ENCODE measurements at regions of chr14 and their contacts with region 1.

Region 1: GRCh38 chr14:55446218-55446654 is 5.8 kb upstream of the TBPL2 start:
- DNase-seq: peak; percentile 80
- H3K4me3 ChIP-seq: no peak overlapping the region
- H3K27ac ChIP-seq: no peak overlapping the region
- H3K4me1 ChIP-seq: peaks cover 39% of the 10 kb centered on the region
- H3K27me3 ChIP-seq: no peaks in the 10 kb centered on the region
- CTCF ChIP-seq: peak; percentile 58 to 65
- POLR2A ChIP-seq: no peak

Region 2: GRCh38 chr14:55386031-55386808 is 60.0 kb before region 1 on chr14:
- CTCF ChIA-PET with region 1: no interaction called
- POLR2A ChIA-PET with region 1: no interaction called
- dilution Hi-C with region 1: no loop called
- intact Hi-C with region 1: no loop called
- DNase-seq: no peak
- H3K4me3 ChIP-seq: no peak overlapping the region
- H3K27ac ChIP-seq: no peak overlapping the region
- H3K4me1 ChIP-seq: no peaks in the 10 kb centered on the region
- H3K27me3 ChIP-seq: no peaks in the 10 kb centered on the region
- CTCF ChIP-seq: no peak
- POLR2A ChIP-seq: no peak

Region 3: DNA sequence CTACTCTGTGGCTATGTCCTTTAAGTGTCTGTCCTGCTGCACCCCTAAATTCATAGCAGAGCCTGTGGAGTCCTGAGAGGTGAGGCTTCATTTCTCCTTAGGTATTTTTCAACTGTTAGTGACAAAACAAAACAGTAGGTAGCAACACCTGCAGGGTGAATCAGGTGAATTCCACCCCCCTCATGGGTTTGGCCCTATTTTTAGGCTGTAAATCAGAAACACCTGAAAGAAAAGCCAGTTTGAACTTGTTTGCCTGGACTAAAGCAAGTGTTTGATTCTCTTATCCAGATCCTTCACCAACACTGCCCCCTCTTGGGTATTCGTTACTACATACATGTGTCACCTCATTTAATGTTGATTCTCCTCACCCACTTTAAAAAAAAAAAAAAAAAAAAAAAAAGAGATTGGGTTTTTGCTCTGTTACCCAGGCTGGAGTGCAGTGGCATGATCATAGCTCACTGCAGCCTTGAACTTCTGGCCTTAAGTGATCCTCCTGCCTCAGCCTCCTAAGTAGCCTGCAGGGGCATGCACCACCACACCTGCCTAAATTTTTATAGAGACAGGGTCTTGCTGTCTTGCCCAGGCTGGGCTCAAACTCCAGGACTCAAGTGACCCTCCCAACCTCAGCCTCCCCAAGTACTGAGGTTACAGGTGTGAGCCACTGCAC is 16.1 kb before region 1 on chr14:
- CTCF ChIA-PET with region 1: interaction called, 12 read pairs
- POLR2A ChIA-PET with region 1: no interaction called
- dilution Hi-C with region 1: no loop called
- intact Hi-C with region 1: no loop called
- DNase-seq: peak; percentile 76
- H3K4me3 ChIP-seq: no peak overlapping the region
- H3K27ac ChIP-seq: no peak overlapping the region
- H3K4me1 ChIP-seq: no peaks in the 10 kb centered on the region
- H3K27me3 ChIP-seq: peaks cover 0 to under 1% of the 10 kb centered on the region in 2 experiments
- CTCF ChIP-seq: peak; percentile 30 to 44
- POLR2A ChIP-seq: no peak

Region 4: GRCh38 chr14:55572578-55572977 is 126.3 kb after region 1 on chr14:
- CTCF ChIA-PET with region 1: interaction called, 40 read pairs
- POLR2A ChIA-PET with region 1: no interaction called
- dilution Hi-C with region 1: no loop called
- intact Hi-C with region 1: loop called (anchors 1 kb)
- DNase-seq: peak; percentile 82
- H3K4me3 ChIP-seq: no peak overlapping the region
- H3K27ac ChIP-seq: no peak overlapping the region
- H3K4me1 ChIP-seq: peaks cover 11% of the 10 kb centered on the region
- H3K27me3 ChIP-seq: no peaks in the 10 kb centered on the region
- CTCF ChIP-seq: no peak
- POLR2A ChIP-seq: peak; percentile 30

Region 5: GRCh38 chr14:55605605-55606196 is 159.5 kb after region 1 on chr14:
- CTCF ChIA-PET with region 1: interaction called, 30 read pairs
- POLR2A ChIA-PET with region 1: no interaction called
- dilution Hi-C with region 1: no loop called
- intact Hi-C with region 1: no loop called
- DNase-seq: peak; percentile 46
- H3K4me3 ChIP-seq: no peak overlapping the region
- H3K27ac ChIP-seq: peak overlapping the region; percentile 13
- H3K4me1 ChIP-seq: peaks cover 49% of the 10 kb centered on the region
- H3K27me3 ChIP-seq: no peaks in the 10 kb centered on the region
- CTCF ChIP-seq: no peak
- POLR2A ChIP-seq: no peak

Region 6: DNA sequence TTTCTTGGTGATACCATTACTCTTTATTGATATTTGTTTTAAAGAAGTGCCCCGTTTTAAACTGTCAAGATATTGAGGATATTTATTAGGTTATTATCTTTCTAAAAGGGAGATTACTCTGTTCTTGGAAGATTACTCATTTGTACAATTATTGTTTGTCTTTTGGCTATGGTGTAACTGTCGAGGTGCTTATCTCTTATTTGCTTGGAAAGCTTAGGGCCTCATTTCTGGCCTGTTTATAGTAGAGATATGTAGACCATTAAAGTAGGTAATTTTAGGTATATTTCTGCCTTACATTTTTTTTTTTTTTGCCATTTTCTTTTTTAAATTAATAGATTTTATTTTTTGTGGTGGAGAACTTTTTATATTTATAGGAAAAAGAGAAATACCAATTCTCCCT is 208.0 kb after region 1 on chr14:
- CTCF ChIA-PET with region 1: interaction called, 22 read pairs
- POLR2A ChIA-PET with region 1: no interaction called
- dilution Hi-C with region 1: no loop called
- intact Hi-C with region 1: no loop called
- DNase-seq: no peak
- H3K4me3 ChIP-seq: no peak overlapping the region
- H3K27ac ChIP-seq: no peak overlapping the region
- H3K4me1 ChIP-seq: no peaks in the 10 kb centered on the region
- H3K27me3 ChIP-seq: no peaks in the 10 kb centered on the region
- CTCF ChIP-seq: no peak
- POLR2A ChIP-seq: no peak

Region 7: GRCh38 chr14:55707365-55707804 is 261.1 kb after region 1 on chr14:
- CTCF ChIA-PET with region 1: interaction called, 10 read pairs
- POLR2A ChIA-PET with region 1: no interaction called
- dilution Hi-C with region 1: no loop called
- intact Hi-C with region 1: no loop called
- DNase-seq: peak; percentile 51
- H3K4me3 ChIP-seq: no peak overlapping the region
- H3K27ac ChIP-seq: no peak overlapping the region
- H3K4me1 ChIP-seq: no peaks in the 10 kb centered on the region
- H3K27me3 ChIP-seq: no peaks in the 10 kb centered on the region
- CTCF ChIP-seq: peak; percentile 28 to 53
- POLR2A ChIP-seq: no peak

Region 8: GRCh38 chr14:56339855-56340701 is 893.8 kb after region 1 on chr14:
- CTCF ChIA-PET with region 1: interaction called, 13 read pairs
- POLR2A ChIA-PET with region 1: no interaction called
- dilution Hi-C with region 1: no loop called
- intact Hi-C with region 1: loop called (anchors 2 kb)
- DNase-seq: peak; percentile 89
- H3K4me3 ChIP-seq: no peak overlapping the region
- H3K27ac ChIP-seq: peak overlapping the region; percentile 55
- H3K4me1 ChIP-seq: peaks cover 43% of the 10 kb centered on the region
- H3K27me3 ChIP-seq: no peaks in the 10 kb centered on the region
- CTCF ChIP-seq: peak; percentile 86 to 94
- POLR2A ChIP-seq: no peak